CD8-positive, alpha-beta T cell (primary cell): ENCODE measurements at regions of chr5 and their contacts with region 1.

Region 1: DNA sequence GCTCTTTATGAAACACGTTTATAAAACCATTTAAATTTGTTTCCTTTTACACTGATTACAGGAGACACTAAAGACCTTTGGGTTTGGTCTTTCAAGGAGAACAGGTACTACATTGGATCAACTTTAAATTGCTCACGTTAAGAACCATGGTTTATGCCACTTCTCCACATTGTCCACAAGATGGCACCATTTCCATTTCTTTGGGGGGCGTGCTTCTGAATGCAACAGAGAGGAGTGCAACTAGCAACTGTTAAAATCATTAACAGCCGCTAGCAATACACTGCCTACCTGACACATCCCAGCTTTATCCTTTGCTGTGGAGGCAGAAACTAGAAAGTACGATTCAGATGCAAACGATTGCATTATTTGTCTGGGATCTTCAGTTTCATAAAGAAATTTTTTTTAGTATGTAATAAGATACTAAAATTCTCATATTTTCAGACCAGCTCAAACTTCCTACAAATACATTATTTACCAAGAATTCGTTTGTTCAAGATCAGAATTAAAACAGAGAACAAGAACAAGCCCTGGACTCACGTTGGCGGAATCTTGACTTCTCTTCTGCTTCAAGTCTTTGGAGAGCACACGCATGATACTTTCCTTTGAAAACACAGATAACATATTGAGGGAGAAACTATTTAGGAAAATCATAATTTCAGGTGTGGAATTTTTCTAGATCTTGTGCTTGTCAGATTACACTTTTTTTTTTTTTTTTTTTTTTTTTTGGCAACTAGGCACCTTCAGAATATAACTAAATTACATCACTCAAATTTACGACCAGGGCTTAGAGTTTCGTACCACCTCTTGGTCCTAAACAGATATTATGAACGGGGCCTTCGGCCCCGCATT is 702 bp downstream of the CDC20B start:
- DNase-seq: peak; percentile 30 to 90 (median 56)
- ATAC-seq: peak; percentile 71
- H3K4me3 ChIP-seq: peak overlapping the region; percentile 57 to 59
- H3K4me3 Mint-ChIP-seq: peak overlapping the region; percentile 85
- H3K27ac ChIP-seq: no peak overlapping the region
- H3K27ac Mint-ChIP-seq: no peak overlapping the region
- H3K4me1 ChIP-seq: peaks cover 30% of the 10 kb centered on the region
- H3K4me1 Mint-ChIP-seq: peaks cover 32% of the 10 kb centered on the region
- H3K27me3 ChIP-seq: peaks cover 28 to 30% of the 10 kb centered on the region in 2 experiments
- H3K27me3 Mint-ChIP-seq: peaks cover 63% of the 10 kb centered on the region
- CTCF ChIP-seq: peak; percentile 70

Region 2: GRCh38 chr5:55232985-55233928 is 61.0 kb after region 1 on chr5 and contains the start of gene CCNO:
- CTCF ChIA-PET with region 1: interaction called, 7 read pairs
- POLR2A ChIA-PET with region 1: no interaction called
- intact Hi-C with region 1: loop called (anchors 2 kb)
- DNase-seq: peak in 6 of 9 experiments; percentile 43 to 73 (median 60)
- ATAC-seq: peak; percentile 66
- H3K4me3 ChIP-seq: peak within 1 kb of the TSS; percentile 52 to 62
- H3K4me3 Mint-ChIP-seq: peak within 1 kb of the TSS; percentile 86
- H3K27ac ChIP-seq: no peak within 1 kb of the TSS
- H3K27ac Mint-ChIP-seq: no peak within 1 kb of the TSS
- H3K4me1 ChIP-seq: peaks cover 31% of the 10 kb centered on the region
- H3K4me1 Mint-ChIP-seq: peaks cover 31% of the 10 kb centered on the region
- H3K27me3 ChIP-seq: peaks cover 44 to 60% of the 10 kb centered on the region in 2 experiments
- H3K27me3 Mint-ChIP-seq: peaks cover 64% of the 10 kb centered on the region
- CTCF ChIP-seq: no peak
- total RNA-seq, gene CCNO: not detected

Region 3: DNA sequence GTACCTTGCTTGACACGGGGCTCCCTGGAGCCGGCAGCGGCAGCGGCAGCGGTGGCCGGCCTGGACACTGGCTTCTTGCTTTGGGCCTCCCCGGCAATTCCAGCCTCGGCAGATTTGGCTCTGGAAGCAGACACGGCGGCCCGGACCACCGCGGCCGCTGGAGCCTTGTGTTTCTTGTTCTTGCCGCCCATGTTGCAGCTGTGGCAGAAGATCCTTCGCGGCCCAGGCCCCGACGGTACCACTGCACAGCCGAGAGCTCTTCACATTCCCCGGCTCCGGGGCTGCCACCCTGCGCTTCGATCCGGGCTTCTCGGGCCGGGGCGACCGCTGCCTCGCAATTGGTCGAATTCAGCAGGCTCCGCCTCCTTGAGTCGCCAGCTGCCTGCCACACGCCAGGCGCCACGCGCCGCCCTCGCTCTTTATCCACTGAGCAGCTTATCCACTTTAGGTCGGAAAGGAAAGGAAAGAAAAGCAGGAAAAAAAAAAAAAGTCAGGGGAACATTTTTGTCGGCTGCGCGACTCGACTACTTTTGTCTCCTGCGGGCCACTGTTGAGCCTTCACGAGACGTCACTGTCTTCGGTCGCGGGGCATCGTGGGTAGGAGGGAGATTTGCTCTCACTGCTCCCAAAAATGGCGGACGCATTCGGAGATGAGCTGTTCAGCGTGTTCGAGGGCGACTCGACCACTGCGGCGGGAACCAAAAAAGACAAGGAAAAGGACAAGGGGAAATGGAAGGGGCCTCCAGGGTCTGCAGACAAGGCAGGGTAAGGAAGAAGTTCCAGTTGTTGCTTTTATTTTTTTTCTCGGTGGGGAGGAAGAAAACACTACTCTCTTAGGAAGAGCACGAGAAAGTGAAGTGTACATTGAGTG is 135.3 kb after region 1 on chr5 and contains the starts of genes DHX29 and MTREX:
- CTCF ChIA-PET with region 1: interaction called, 3 read pairs
- POLR2A ChIA-PET with region 1: no interaction called
- intact Hi-C with region 1: loop called (anchors 1 to 2 kb)
- DNase-seq: peak; percentile 76 to 93 (median 87)
- ATAC-seq: peak; percentile 90
- H3K4me3 ChIP-seq: peak within 1 kb of the TSS; percentile 72 to 76
- H3K4me3 Mint-ChIP-seq: no peak within 1 kb of the TSS
- H3K27ac ChIP-seq: peak within 1 kb of the TSS; percentile 86 to 90
- H3K27ac Mint-ChIP-seq: no peak within 1 kb of the TSS
- H3K4me1 ChIP-seq: peaks cover 41% of the 10 kb centered on the region
- H3K4me1 Mint-ChIP-seq: peaks cover 38% of the 10 kb centered on the region
- H3K27me3 ChIP-seq: no peaks in the 10 kb centered on the region
- H3K27me3 Mint-ChIP-seq: no peaks in the 10 kb centered on the region
- CTCF ChIP-seq: no peak
- total RNA-seq, gene DHX29: 15.4 to 19.9 TPM
- total RNA-seq, gene MTREX: 62.8 to 66.5 TPM

Region 4: GRCh38 chr5:55534436-55535198 is 362.3 kb after region 1 on chr5 and contains the start of gene PLPP1:
- CTCF ChIA-PET with region 1: no interaction called
- POLR2A ChIA-PET with region 1: no interaction called
- intact Hi-C with region 1: loop called (anchors 5 to 10 kb)
- DNase-seq: peak; percentile 57 to 93 (median 79)
- ATAC-seq: peak; percentile 79
- H3K4me3 ChIP-seq: peak within 1 kb of the TSS; percentile 81 to 97
- H3K4me3 Mint-ChIP-seq: peak within 1 kb of the TSS; percentile 93
- H3K27ac ChIP-seq: peak within 1 kb of the TSS; percentile 81 to 87
- H3K27ac Mint-ChIP-seq: peak within 1 kb of the TSS; percentile 92
- H3K4me1 ChIP-seq: peaks cover 25% of the 10 kb centered on the region
- H3K4me1 Mint-ChIP-seq: peaks cover 37% of the 10 kb centered on the region
- H3K27me3 ChIP-seq: no peaks in the 10 kb centered on the region
- H3K27me3 Mint-ChIP-seq: no peaks in the 10 kb centered on the region
- CTCF ChIP-seq: no peak
- total RNA-seq, gene PLPP1: 5.8 to 5.9 TPM

Region 5: GRCh38 chr5:55711968-55712859 is 539.9 kb after region 1 on chr5 and contains the start of gene SLC38A9:
- CTCF ChIA-PET with region 1: interaction called, 3 read pairs
- POLR2A ChIA-PET with region 1: no interaction called
- intact Hi-C with region 1: loop called in 1 of 2 experiments (anchors 5 kb)
- DNase-seq: peak; percentile 83 to 94 (median 91)
- ATAC-seq: peak; percentile 99
- H3K4me3 ChIP-seq: peak within 1 kb of the TSS; percentile 92 to 100
- H3K4me3 Mint-ChIP-seq: peak within 1 kb of the TSS; percentile 98
- H3K27ac ChIP-seq: peak within 1 kb of the TSS; percentile 54 to 73
- H3K27ac Mint-ChIP-seq: peak within 1 kb of the TSS; percentile 88
- H3K4me1 ChIP-seq: peaks cover 9% of the 10 kb centered on the region
- H3K4me1 Mint-ChIP-seq: peaks cover 31% of the 10 kb centered on the region
- H3K27me3 ChIP-seq: no peaks in the 10 kb centered on the region
- H3K27me3 Mint-ChIP-seq: peaks cover 3% of the 10 kb centered on the region
- CTCF ChIP-seq: no peak
- total RNA-seq, gene SLC38A9: 6.0 to 6.8 TPM

Region 6: GRCh38 chr5:56200856-56201666 is 1028.8 kb after region 1 on chr5:
- CTCF ChIA-PET with region 1: no interaction called
- POLR2A ChIA-PET with region 1: no interaction called
- intact Hi-C with region 1: loop called in 1 of 2 experiments (anchors 5 kb)
- DNase-seq: peak; percentile 11 to 80 (median 49)
- ATAC-seq: peak; percentile 91
- H3K4me3 ChIP-seq: no peak overlapping the region
- H3K4me3 Mint-ChIP-seq: no peak overlapping the region
- H3K27ac ChIP-seq: no peak overlapping the region
- H3K27ac Mint-ChIP-seq: no peak overlapping the region
- H3K4me1 ChIP-seq: peaks cover 6% of the 10 kb centered on the region
- H3K4me1 Mint-ChIP-seq: peaks cover 3% of the 10 kb centered on the region
- H3K27me3 ChIP-seq: no peaks in the 10 kb centered on the region
- H3K27me3 Mint-ChIP-seq: no peaks in the 10 kb centered on the region
- CTCF ChIP-seq: peak; percentile 71